CD4-positive, alpha-beta memory T cell (primary cell): ENCODE measurements at regions of chr1 and their contacts with region 1.

Region 1: GRCh38 chr1:151156515-151156819 is at the start of gene TNFAIP8L2:
- DNase-seq: peak; percentile 61 to 85 (median 65)
- H3K4me3 ChIP-seq: peak within 1 kb of the TSS; percentile 82 to 98
- H3K4me3 Mint-ChIP-seq: peak within 1 kb of the TSS; percentile 98 to 100 (median 98)
- H3K27ac ChIP-seq: peak within 1 kb of the TSS; percentile 68
- H3K27ac Mint-ChIP-seq: peak within 1 kb of the TSS; percentile 89 to 96 (median 94)
- H3K4me1 ChIP-seq: peaks cover 47% of the 10 kb centered on the region
- H3K4me1 Mint-ChIP-seq: peaks cover 25 to 55% (median 35%) of the 10 kb centered on the region in 4 donors
- H3K27me3 ChIP-seq: no peaks in the 10 kb centered on the region
- H3K27me3 Mint-ChIP-seq: no peaks in the 10 kb centered on the region
- total RNA-seq, gene TNFAIP8L2: 45.9 to 49.7 TPM

Region 2: GRCh38 chr1:151008190-151008860 is 148.1 kb before region 1 on chr1 and contains the start of gene PRUNE1:
- CTCF ChIA-PET with region 1: interaction called, 13 read pairs
- POLR2A ChIA-PET with region 1: interaction called, 8 read pairs
- intact Hi-C with region 1: loop called (anchors 5 kb)
- DNase-seq: peak; percentile 92 to 99 (median 96)
- H3K4me3 ChIP-seq: peak within 1 kb of the TSS; percentile 74 to 92
- H3K4me3 Mint-ChIP-seq: peak within 1 kb of the TSS; percentile 88 to 99 (median 95)
- H3K27ac ChIP-seq: peak within 1 kb of the TSS; percentile 88
- H3K27ac Mint-ChIP-seq: peak within 1 kb of the TSS; percentile 90 to 100 (median 99)
- H3K4me1 ChIP-seq: peaks cover 67% of the 10 kb centered on the region
- H3K4me1 Mint-ChIP-seq: peaks cover 47 to 93% (median 69%) of the 10 kb centered on the region in 4 donors
- H3K27me3 ChIP-seq: no peaks in the 10 kb centered on the region
- H3K27me3 Mint-ChIP-seq: no peaks in the 10 kb centered on the region
- total RNA-seq, gene PRUNE1: 35.0 to 38.9 TPM

Region 3: DNA sequence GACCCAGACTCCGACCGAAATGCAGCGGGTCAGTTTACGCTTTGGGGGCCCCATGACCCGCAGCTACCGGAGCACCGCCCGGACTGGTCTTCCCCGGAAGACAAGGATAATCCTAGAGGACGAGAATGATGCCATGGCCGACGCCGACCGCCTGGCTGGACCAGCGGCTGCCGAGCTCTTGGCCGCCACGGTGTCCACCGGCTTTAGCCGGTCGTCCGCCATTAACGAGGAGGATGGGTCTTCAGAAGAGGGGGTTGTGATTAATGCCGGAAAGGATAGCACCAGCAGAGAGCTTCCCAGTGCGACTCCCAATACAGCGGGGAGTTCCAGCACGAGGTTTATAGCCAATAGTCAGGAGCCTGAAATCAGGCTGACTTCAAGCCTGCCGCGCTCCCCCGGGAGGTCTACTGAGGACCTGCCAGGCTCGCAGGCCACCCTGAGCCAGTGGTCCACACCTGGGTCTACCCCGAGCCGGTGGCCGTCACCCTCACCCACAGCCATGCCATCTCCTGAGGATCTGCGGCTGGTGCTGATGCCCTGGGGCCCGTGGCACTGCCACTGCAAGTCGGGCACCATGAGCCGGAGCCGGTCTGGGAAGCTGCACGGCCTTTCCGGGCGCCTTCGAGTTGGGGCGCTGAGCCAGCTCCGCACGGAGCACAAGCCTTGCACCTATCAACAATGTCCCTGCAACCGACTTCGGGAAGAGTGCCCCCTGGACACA is 108.4 kb before region 1 on chr1:
- CTCF ChIA-PET with region 1: interaction called, 20 read pairs
- POLR2A ChIA-PET with region 1: interaction called, 19 read pairs
- intact Hi-C with region 1: no loop called
- DNase-seq: peak; percentile 59 to 72 (median 64)
- H3K4me3 ChIP-seq: peak overlapping the region; percentile 59 to 74
- H3K4me3 Mint-ChIP-seq: peak overlapping the region; percentile 86 to 95 (median 90)
- H3K27ac ChIP-seq: peak overlapping the region; percentile 74
- H3K27ac Mint-ChIP-seq: peak overlapping the region; percentile 88 to 98 (median 93)
- H3K4me1 ChIP-seq: peaks cover 38% of the 10 kb centered on the region
- H3K4me1 Mint-ChIP-seq: peaks cover 35 to 81% (median 61%) of the 10 kb centered on the region in 4 donors
- H3K27me3 ChIP-seq: no peaks in the 10 kb centered on the region
- H3K27me3 Mint-ChIP-seq: no peaks in the 10 kb centered on the region

Region 4: DNA sequence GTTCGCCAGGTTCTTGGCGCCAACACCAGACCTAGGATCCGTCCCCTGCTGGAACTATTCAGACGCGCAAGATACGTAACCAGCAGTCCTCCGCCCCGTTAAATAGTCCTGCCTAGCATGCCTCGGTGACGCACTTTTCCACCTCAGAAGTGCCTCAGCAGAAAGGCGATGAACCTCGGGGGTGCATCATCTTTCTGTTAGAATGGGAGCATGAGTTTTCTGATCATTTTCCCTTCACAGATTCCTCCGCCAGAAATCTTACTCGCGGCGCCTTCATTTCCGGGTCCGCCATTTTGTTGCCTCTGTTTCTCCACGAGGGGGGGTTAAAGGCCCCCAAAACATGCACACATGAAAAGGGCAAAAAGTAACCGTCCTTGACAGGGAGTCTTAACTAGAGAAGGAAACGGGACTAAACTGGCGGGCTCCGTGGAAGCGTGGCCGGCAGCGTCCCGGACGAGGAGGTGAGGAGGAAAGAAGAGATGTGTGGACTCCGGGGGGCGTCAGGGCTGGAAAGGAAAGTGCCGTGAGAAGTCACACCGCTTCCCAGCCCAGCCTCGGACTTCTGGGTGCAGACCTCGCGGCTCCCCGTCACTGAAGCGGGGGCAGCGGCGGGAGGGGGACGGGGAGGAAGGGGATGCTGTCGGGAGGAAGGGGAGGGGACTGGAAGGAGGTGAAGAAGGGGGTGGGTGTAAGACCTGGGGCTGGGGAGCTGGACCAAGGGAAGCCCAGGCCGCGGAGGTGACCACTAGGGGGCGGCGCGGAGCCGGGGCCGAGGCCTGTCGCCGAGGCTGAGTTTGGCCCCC is 85.8 kb before region 1 on chr1 and contains the start of gene GABPB2:
- CTCF ChIA-PET with region 1: interaction called, 13 read pairs
- POLR2A ChIA-PET with region 1: interaction called, 16 read pairs
- intact Hi-C with region 1: loop called (anchors 1 kb)
- DNase-seq: peak; percentile 87 to 96 (median 88)
- H3K4me3 ChIP-seq: peak within 1 kb of the TSS; percentile 57 to 96
- H3K4me3 Mint-ChIP-seq: peak within 1 kb of the TSS; percentile 95 to 100 (median 99)
- H3K27ac ChIP-seq: peak within 1 kb of the TSS; percentile 97
- H3K27ac Mint-ChIP-seq: peak within 1 kb of the TSS; percentile 97 to 100 (median 100)
- H3K4me1 ChIP-seq: peaks cover 17% of the 10 kb centered on the region
- H3K4me1 Mint-ChIP-seq: peaks cover 13 to 34% (median 23%) of the 10 kb centered on the region in 4 donors
- H3K27me3 ChIP-seq: no peaks in the 10 kb centered on the region
- H3K27me3 Mint-ChIP-seq: no peaks in the 10 kb centered on the region
- total RNA-seq, gene GABPB2: 36.8 to 42.8 TPM

Region 5: GRCh38 chr1:151106894-151107293 is 49.6 kb before region 1 on chr1:
- CTCF ChIA-PET with region 1: interaction called, 324 read pairs
- POLR2A ChIA-PET with region 1: interaction called, 12 read pairs
- intact Hi-C with region 1: no loop called
- DNase-seq: no peak
- H3K4me3 ChIP-seq: no peak overlapping the region
- H3K4me3 Mint-ChIP-seq: no peak overlapping the region
- H3K27ac ChIP-seq: no peak overlapping the region
- H3K27ac Mint-ChIP-seq: peak overlapping the region in 1 of 7 donors; percentile 31
- H3K4me1 ChIP-seq: no peaks in the 10 kb centered on the region
- H3K4me1 Mint-ChIP-seq: no peaks in the 10 kb centered on the region
- H3K27me3 ChIP-seq: no peaks in the 10 kb centered on the region
- H3K27me3 Mint-ChIP-seq: no peaks in the 10 kb centered on the region

Region 6: DNA sequence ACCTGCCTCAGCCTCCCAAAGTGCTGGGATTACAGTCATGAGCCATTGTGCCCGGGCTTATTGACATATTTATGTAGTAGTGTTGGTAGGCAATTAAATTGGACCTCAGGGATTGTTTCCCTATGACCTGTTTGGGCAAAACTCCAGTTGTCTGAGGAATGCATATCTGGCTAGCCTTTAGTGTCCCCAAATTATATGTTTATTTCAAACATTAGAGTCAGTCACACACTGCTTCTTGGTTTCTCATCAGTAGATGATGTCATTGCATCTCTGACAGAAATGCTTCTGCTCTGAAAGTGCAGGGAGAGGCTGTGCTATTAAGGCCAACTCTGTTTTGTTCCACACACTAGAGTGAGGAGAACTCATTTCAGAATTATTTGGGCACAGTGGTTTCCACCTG is 54.4 kb after region 1 on chr1:
- CTCF ChIA-PET with region 1: no interaction called
- POLR2A ChIA-PET with region 1: no interaction called
- intact Hi-C with region 1: no loop called
- DNase-seq: no peak
- H3K4me3 ChIP-seq: no peak overlapping the region
- H3K4me3 Mint-ChIP-seq: no peak overlapping the region
- H3K27ac ChIP-seq: no peak overlapping the region
- H3K27ac Mint-ChIP-seq: peak overlapping the region in 1 of 7 donors; percentile 29
- H3K4me1 ChIP-seq: peaks cover 22% of the 10 kb centered on the region
- H3K4me1 Mint-ChIP-seq: peaks cover 18 to 41% (median 22%) of the 10 kb centered on the region in 4 donors
- H3K27me3 ChIP-seq: no peaks in the 10 kb centered on the region
- H3K27me3 Mint-ChIP-seq: no peaks in the 10 kb centered on the region

Region 7: DNA sequence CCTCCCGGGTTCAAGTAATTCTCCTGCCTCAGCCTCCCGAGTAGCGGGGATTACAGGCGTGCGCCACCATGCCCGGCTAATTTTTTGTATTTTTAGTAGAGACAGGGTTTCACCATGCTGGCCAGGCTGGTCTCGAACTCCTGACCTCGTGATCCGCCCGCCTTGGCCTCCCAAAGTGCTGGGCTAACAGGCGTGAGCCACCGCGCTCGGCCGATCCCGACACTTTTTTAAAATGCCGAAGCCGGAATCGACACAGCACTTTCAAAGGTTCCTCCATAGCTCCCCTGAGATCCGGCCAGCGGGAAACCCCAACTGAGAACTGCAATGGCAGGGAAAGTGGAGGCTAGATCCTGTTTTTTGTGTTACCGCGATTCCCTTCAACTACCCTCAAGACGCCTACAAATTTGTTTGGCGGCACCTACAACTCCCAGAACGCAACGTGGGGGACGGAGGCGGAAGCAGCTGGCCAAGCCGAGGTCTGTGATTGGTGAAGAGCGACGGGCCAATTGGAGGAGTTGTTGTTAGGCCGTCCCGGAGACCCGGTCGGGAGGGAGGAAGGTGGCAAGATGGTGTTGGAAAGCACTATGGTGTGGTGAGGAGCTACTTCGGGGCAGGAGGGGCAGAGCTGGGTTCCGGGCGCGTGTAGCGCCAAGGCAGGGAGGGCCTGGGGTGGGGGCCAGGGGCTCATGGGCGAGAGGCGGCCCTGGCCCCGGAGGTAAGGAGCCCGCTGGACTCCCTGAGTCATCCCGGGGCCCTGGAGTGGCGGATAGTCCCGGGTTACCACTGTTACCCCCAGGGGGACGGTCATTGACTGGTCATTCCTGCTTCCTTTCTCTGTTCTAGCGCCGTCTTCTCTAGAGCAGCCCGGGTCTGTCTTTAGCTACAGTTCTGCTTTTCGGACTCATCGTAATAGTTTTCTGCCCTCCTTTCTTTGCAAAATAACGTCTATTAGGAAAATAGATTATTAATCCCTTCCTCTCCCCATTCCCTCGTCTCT is 98.0 kb after region 1 on chr1 and contains the start of gene PSMD4:
- CTCF ChIA-PET with region 1: interaction called, 17 read pairs
- POLR2A ChIA-PET with region 1: interaction called, 5 read pairs
- intact Hi-C with region 1: loop called (anchors 5 kb)
- DNase-seq: peak; percentile 93 to 96 (median 94)
- H3K4me3 ChIP-seq: peak within 1 kb of the TSS; percentile 53 to 88
- H3K4me3 Mint-ChIP-seq: peak within 1 kb of the TSS; percentile 92 to 100 (median 96)
- H3K27ac ChIP-seq: peak within 1 kb of the TSS; percentile 65
- H3K27ac Mint-ChIP-seq: peak within 1 kb of the TSS; percentile 95 to 99 (median 97)
- H3K4me1 ChIP-seq: peaks cover 26% of the 10 kb centered on the region
- H3K4me1 Mint-ChIP-seq: peaks cover 25 to 47% (median 34%) of the 10 kb centered on the region in 4 donors
- H3K27me3 ChIP-seq: no peaks in the 10 kb centered on the region
- H3K27me3 Mint-ChIP-seq: no peaks in the 10 kb centered on the region
- total RNA-seq, gene PSMD4: 143 to 151 TPM

Region 8: DNA sequence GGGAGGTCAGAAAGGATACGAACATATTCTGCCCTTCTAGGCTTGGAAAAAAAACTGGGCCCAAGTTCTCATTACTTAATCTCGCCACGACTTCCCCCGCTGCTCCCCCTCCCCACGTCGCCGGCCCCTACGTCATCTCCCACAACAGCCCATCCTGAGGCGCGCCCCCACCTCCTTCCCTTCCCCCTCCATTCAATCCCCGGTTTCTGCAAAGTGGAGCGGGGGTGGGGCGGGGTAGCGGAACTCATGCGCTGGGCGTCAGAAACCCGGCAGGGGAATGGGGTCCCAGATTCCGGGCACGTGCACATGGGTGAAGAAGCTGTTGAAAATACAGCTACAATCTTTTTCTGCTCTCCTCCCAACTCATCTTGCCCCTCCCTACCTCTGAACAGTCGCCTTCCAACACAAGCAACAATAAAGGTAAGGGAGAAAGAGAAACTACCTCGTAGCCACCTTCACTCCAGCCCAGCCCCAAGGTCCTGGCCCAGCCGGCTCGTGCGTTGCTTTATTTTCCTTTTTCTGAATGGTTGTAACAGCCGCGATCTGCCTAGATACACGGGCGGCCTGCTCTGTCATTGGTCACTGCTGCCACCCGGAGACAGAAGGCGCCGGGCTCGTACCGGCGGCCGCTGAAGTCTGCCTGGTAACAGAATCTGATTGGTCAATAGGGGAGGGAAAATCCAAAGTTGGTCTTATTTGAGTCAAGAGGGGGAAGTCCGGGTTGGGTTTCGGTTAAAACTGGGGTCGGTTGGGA is 190.5 kb after region 1 on chr1 and contains the start of gene RFX5:
- CTCF ChIA-PET with region 1: no interaction called
- POLR2A ChIA-PET with region 1: no interaction called
- intact Hi-C with region 1: loop called (anchors 1 kb)
- DNase-seq: peak; percentile 93 to 98 (median 97)
- H3K4me3 ChIP-seq: peak within 1 kb of the TSS; percentile 59 to 71
- H3K4me3 Mint-ChIP-seq: peak within 1 kb of the TSS; percentile 90 to 98 (median 94)
- H3K27ac ChIP-seq: peak within 1 kb of the TSS; percentile 97
- H3K27ac Mint-ChIP-seq: peak within 1 kb of the TSS; percentile 96 to 100 (median 98)
- H3K4me1 ChIP-seq: peaks cover 28% of the 10 kb centered on the region
- H3K4me1 Mint-ChIP-seq: peaks cover 22 to 41% (median 31%) of the 10 kb centered on the region in 4 donors
- H3K27me3 ChIP-seq: no peaks in the 10 kb centered on the region
- H3K27me3 Mint-ChIP-seq: no peaks in the 10 kb centered on the region
- total RNA-seq, gene RFX5: 56.3 to 64.3 TPM